GM12878 (cell line): ENCODE measurements at regions of chr7 and their contacts with region 1.

Region 1: GRCh38 chr7:105652359-105652993 is 71.2 kb upstream of the EFCAB10 start:
- DNase-seq: no peak
- ATAC-seq: peak; percentile 98
- H3K4me3 ChIP-seq: no peak overlapping the region
- H3K27ac ChIP-seq: no peak overlapping the region
- H3K4me1 ChIP-seq: no peaks in the 10 kb centered on the region
- H3K27me3 ChIP-seq: no peaks in the 10 kb centered on the region; a peak in 2 of 4 replicates
- CTCF ChIP-seq: peak; percentile 83 to 93 (median 87)
- EP300 ChIP-seq: no peak
- POLR2A ChIP-seq: no peak
- RAD21 ChIP-seq: peak; percentile 70

Region 2: DNA sequence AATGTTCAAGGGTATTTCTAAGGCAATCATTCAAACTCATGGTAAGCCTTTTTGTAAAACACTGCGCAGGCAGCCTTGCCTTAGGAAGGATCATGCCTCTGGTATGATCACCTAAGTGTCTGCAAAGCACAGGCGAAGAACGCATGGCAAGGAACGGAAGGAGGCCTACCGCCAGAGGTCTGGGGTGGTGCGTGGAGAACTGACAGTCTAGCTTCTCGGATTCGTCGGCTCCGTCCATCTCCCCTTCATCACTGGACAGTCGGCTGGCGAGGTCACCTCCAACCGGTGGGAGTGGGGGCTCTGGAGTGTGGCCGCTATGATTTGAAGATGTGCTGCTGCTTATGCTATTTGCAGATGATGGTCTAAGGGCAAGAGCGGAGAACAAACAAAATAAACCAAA is 28.6 kb before region 1 on chr7:
- CTCF ChIA-PET with region 1: no interaction called
- POLR2A ChIA-PET with region 1: no interaction called
- RAD21 ChIA-PET with region 1: no interaction called
- SMC1A ChIA-PET with region 1: no interaction called
- in situ Hi-C with region 1: no loop called
- intact Hi-C with region 1: no loop called
- DNase-seq: no peak
- ATAC-seq: no peak
- H3K4me3 ChIP-seq: no peak overlapping the region
- H3K27ac ChIP-seq: no peak overlapping the region
- H3K4me1 ChIP-seq: no peaks in the 10 kb centered on the region
- H3K27me3 ChIP-seq: no peaks in the 10 kb centered on the region
- CTCF ChIP-seq: no peak
- EP300 ChIP-seq: no peak
- POLR2A ChIP-seq: no peak
- RAD21 ChIP-seq: no peak

Region 3: DNA sequence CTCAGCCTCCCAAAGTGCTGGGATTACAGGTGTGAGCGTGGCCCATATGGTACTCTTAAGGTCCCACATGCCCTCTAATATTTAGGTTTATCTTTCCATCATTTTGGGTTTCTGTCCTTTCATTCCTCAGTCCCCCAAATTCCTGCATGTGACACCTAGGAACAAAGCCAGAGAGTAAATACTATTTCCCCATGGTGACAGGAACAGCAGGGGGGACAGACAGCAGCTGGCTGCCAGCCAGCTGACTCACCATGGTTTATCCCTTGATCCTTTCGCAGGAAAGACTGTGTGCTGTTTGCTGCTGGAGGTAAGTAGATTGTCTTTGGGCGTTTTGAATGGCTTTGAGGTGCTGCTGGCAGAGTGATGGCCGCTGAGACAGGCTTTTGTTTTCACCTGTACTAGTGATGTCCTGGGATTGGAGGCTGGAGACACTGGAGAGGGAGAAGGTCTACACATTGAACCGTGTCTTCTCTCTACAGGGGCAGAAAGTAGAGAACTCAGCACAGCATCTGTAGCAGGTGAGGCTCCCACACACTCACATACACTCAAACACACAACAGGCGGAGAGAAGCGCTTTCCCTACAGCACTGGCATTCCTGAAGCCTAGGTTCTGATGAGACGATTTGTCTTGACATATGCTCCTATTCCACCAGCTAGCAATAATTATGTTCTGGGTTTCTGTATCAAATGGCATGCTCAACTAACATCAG is 12.5 kb after region 1 on chr7:
- CTCF ChIA-PET with region 1: interaction called, 23 read pairs
- POLR2A ChIA-PET with region 1: no interaction called
- RAD21 ChIA-PET with region 1: interaction called, 3 read pairs
- SMC1A ChIA-PET with region 1: no interaction called
- in situ Hi-C with region 1: no loop called
- intact Hi-C with region 1: no loop called
- DNase-seq: no peak
- ATAC-seq: no peak
- H3K4me3 ChIP-seq: no peak overlapping the region
- H3K27ac ChIP-seq: no peak overlapping the region
- H3K4me1 ChIP-seq: no peaks in the 10 kb centered on the region
- H3K27me3 ChIP-seq: no peaks in the 10 kb centered on the region; a peak in 1 of 4 replicates
- CTCF ChIP-seq: no peak
- EP300 ChIP-seq: no peak
- POLR2A ChIP-seq: no peak
- RAD21 ChIP-seq: no peak

Region 4: DNA sequence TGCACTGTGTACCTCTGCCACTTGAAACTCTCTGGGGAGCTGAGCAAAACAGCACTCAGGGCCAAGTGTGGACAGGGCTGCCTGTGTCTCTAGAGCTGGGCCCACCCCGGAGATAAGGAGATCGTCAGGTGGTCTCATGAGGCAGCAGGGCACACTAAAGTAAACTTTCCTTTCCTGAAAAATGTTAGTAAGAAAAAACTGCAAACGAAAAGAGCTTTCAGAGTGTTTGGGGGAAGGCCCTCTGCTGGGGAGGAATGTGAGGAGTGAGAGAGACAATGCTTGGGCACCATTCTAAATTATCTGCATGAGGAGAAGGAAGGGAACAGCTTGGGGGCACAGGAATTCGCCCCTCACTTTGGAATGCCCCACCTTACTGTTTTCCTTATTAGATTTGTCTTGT is 96.2 kb after region 1 on chr7:
- CTCF ChIA-PET with region 1: interaction called, 6 read pairs
- POLR2A ChIA-PET with region 1: no interaction called
- RAD21 ChIA-PET with region 1: no interaction called
- SMC1A ChIA-PET with region 1: interaction called, 3 read pairs
- in situ Hi-C with region 1: no loop called
- intact Hi-C with region 1: loop called (anchors 5 kb)
- DNase-seq: no peak
- ATAC-seq: no peak
- H3K4me3 ChIP-seq: no peak overlapping the region
- H3K27ac ChIP-seq: no peak overlapping the region
- H3K4me1 ChIP-seq: no peaks in the 10 kb centered on the region
- H3K27me3 ChIP-seq: peaks cover 3 to 4% of the 10 kb centered on the region in 2 experiments; a peak in 3 of 4 replicates
- CTCF ChIP-seq: no peak
- EP300 ChIP-seq: no peak
- POLR2A ChIP-seq: no peak
- RAD21 ChIP-seq: no peak

Region 5: DNA sequence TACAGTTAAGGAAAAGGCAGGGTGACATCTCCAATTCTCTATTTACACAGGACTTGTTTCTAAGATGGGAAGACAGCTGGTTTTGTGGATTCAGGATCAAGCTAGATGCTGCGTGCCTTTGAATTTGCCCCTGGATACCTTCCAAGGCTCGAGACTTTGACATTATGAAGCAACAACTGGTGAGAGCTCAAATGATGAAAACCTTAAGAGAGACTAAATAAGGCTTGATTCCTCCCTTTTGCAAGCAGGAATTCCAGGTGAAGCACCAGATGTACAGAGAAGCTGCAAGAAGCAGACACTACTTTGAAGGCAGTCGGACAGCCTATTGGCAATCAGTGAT is 142.9 kb after region 1 on chr7:
- CTCF ChIA-PET with region 1: no interaction called
- POLR2A ChIA-PET with region 1: no interaction called
- RAD21 ChIA-PET with region 1: no interaction called
- SMC1A ChIA-PET with region 1: no interaction called
- in situ Hi-C with region 1: no loop called
- intact Hi-C with region 1: no loop called
- DNase-seq: no peak
- ATAC-seq: no peak
- H3K4me3 ChIP-seq: no peak overlapping the region
- H3K27ac ChIP-seq: no peak overlapping the region
- H3K4me1 ChIP-seq: peaks cover 3% of the 10 kb centered on the region; the same call in 1 of the 2 replicates
- H3K27me3 ChIP-seq: peaks cover 3% of the 10 kb centered on the region in 2 experiments; a peak in 1 of 4 replicates
- CTCF ChIP-seq: no peak
- EP300 ChIP-seq: no peak
- POLR2A ChIP-seq: no peak
- RAD21 ChIP-seq: no peak

Region 6: GRCh38 chr7:106009403-106010226 is 357.1 kb after region 1 on chr7:
- CTCF ChIA-PET with region 1: interaction called, 3 read pairs
- POLR2A ChIA-PET with region 1: no interaction called
- RAD21 ChIA-PET with region 1: no interaction called
- SMC1A ChIA-PET with region 1: no interaction called
- in situ Hi-C with region 1: no loop called
- intact Hi-C with region 1: loop called (anchors 10 kb)
- DNase-seq: no peak
- ATAC-seq: peak; percentile 98
- H3K4me3 ChIP-seq: no peak overlapping the region
- H3K27ac ChIP-seq: no peak overlapping the region
- H3K4me1 ChIP-seq: no peaks in the 10 kb centered on the region
- H3K27me3 ChIP-seq: no peaks in the 10 kb centered on the region; a peak in 3 of 4 replicates
- CTCF ChIP-seq: peak; percentile 83 to 94 (median 86)
- EP300 ChIP-seq: no peak
- POLR2A ChIP-seq: no peak
- RAD21 ChIP-seq: peak; percentile 63

Region 7: DNA sequence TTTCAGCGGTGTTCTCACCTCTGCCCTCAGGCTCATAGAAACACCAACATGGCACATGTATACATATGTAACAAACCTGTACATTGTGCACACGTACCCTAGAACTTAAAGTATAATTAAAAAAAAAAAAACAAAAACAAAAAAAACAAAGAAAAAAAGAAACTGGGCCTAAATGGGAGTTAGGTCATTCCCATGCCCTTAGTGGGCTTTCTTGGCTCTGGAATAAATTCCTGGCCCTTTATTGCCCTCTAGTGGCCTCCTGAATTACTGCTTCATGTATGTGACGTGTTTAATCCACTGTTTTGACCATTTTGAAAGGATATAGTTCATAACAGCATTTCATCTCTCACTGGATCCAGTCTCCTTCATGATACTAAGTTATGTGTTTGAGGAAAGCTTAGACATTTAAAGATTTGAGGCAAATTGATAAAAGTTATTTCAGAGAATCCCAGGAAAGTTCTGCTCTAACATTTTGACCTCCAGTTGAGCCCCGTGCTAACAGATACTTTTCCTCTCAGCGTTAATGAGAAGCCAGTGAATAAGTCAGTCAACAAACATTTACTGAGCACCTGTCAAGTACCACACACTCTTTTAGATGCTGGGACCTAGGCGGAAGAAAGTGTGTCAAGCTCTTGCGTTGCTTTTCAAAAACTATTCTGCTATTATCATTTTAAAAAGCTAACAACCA is 514.3 kb after region 1 on chr7:
- CTCF ChIA-PET with region 1: interaction called, 7 read pairs
- POLR2A ChIA-PET with region 1: no interaction called
- RAD21 ChIA-PET with region 1: no interaction called
- SMC1A ChIA-PET with region 1: no interaction called
- in situ Hi-C with region 1: no loop called
- intact Hi-C with region 1: loop called (anchors 1 kb)
- DNase-seq: no peak
- ATAC-seq: peak; percentile 77
- H3K4me3 ChIP-seq: no peak overlapping the region
- H3K27ac ChIP-seq: no peak overlapping the region
- H3K4me1 ChIP-seq: no peaks in the 10 kb centered on the region
- H3K27me3 ChIP-seq: no peaks in the 10 kb centered on the region
- CTCF ChIP-seq: peak; percentile 68 to 77 (median 72); a peak in 5 of 6 replicates
- EP300 ChIP-seq: no peak
- POLR2A ChIP-seq: no peak
- RAD21 ChIP-seq: peak; percentile 85